GM10248 (cell line): ENCODE measurements at regions of chr1 and their contacts with region 1.

Region 1: GRCh38 chr1:206583707-206584648 is 28.3 kb downstream of the EIF2D start:
- DNase-seq: peak; percentile 77
- CTCF ChIP-seq: peak; percentile 83

Region 2: DNA sequence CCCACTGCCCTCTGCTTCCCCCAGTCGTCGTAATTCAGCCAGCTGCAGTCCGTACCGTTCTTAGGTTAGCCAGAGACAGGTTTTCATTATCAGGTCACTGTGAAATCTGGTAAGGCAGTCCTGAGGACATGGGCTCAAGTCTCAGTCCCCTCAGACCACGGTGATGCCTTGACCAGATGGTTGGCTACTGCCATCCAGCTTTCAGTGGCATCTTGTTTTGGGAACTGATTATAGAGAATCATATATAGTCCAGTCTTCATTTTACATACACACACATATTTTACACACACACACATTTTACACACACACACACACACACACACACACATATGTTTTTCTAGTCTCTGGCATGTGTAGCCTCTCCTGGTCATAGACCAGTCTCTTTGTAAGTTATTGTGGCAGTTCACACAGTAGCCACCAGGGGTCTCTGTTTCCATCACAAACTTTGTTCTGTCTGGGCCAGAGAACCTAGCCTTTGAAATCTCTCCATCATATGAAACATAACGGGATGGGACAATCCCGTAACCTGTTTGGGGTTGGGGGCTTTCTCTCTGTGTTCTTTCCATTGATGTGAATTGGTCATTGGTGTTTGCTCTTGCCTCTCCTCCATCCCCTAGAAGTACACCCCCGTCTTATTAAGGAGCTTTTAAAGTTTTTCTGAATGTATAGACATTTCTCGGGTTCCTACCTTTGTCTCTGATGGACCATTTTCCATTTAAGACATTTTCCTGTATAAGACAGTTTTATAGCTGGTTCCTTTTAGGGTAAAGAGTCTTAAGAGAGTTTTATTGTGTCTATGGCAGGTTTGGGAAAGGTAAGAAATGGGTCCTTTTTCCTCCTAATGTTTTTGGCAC is 122.1 kb before region 1 on chr1:
- CTCF ChIA-PET with region 1: interaction called, 23 read pairs
- POLR2A ChIA-PET with region 1: no interaction called
- DNase-seq: peak; percentile 79
- CTCF ChIP-seq: peak; percentile 81

Region 3: GRCh38 chr1:206496131-206496793 is 87.7 kb before region 1 on chr1:
- CTCF ChIA-PET with region 1: interaction called, 135 read pairs
- POLR2A ChIA-PET with region 1: no interaction called
- DNase-seq: peak; percentile 75
- CTCF ChIP-seq: no peak

Region 4: DNA sequence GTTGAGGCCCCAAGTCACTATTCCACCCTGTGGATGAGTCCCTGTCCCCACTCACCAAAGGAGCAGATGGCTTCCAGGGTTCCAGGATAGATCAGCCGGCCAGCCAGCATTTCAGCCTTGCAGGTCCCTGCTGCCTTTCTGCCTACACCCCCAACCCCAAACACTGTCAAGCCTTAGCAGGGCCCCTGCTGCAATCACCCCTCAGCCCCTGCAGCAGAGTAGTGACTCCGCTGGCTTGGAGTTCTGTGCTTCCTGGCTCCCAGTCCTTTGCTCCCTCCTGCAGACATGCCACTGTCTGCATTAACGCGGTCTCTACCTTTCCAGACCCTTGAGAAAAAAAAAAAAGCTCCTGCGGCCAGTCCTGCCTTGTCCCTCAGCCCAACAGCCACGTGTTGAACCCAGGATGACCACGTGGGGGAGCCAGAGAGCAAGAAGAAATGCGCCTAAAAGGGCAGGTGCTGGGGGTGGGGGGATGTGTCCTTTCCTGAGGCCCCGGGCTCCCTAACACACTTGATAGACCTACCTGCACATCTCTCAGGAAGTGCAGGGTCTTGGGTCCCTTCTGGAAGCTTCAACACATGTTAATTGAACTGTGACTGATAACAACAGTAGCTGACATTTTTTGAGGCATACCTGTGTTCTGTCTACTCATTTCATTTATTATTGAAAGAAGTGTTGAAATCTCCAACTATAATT is 39.3 kb before region 1 on chr1:
- CTCF ChIA-PET with region 1: interaction called, 191 read pairs
- POLR2A ChIA-PET with region 1: interaction called, 5 read pairs
- DNase-seq: peak; percentile 85
- CTCF ChIP-seq: peak; percentile 93

Region 5: GRCh38 chr1:206556750-206557635 is 27.0 kb before region 1 on chr1:
- CTCF ChIA-PET with region 1: interaction called, 187 read pairs
- POLR2A ChIA-PET with region 1: interaction called, 5 read pairs
- DNase-seq: peak; percentile 80
- CTCF ChIP-seq: no peak

Region 6: GRCh38 chr1:206612129-206612876 is 28.3 kb after region 1 on chr1 and contains the start of gene EIF2D:
- CTCF ChIA-PET with region 1: interaction called, 46 read pairs
- POLR2A ChIA-PET with region 1: no interaction called
- DNase-seq: peak; percentile 100
- CTCF ChIP-seq: peak; percentile 95